Endothelial cell of umbilical vein (primary cell): ENCODE measurements at regions of chr15 and their contacts with region 1.

Region 1: GRCh38 chr15:63256433-63257274 is 20.8 kb upstream of the APH1B start:
- DNase-seq: peak; percentile 83
- H3K4me3 ChIP-seq: no peak overlapping the region
- H3K27ac ChIP-seq: peak overlapping the region; percentile 72
- H3K4me1 ChIP-seq: peaks cover 30% of the 10 kb centered on the region
- H3K27me3 ChIP-seq: no peaks in the 10 kb centered on the region
- CTCF ChIP-seq: no peak
- POLR2A ChIP-seq: no peak

Region 2: DNA sequence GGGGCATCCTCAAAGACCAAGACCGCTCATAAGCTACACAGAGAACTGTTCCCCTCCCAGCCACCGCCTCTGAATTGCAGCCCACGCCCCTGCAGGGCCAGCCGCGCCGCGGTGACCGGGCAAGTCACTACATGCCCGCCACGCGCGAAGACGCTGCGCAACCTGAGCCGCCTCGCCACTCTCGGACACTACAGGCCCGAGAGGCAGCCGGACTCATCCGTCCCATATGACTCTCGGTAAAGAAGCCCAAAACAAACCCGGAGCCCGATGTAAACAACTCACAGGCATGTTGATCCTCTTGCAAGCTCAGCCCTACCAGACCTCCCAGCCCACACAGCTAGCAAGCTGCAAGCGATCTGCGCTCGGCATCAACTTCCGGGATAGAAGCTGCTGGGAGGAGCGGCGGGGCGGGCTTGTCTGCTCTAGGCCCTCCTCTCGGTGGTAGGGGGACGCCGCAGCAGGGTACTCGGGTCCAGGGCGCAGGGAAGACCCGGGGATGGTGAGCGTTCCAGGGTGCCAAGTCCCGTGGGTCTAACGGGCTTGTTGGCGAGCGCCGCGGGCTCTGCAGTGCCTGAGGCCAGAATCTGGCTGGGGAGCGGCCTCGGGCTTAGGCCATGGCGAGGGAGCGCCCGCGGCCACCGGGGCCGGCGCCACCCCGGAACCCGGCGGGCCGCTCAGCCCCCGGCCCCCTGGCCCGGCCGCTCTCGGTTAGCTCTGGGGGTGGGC is 99.4 kb before region 1 on chr15 and contains the start of gene RPS27L:
- CTCF ChIA-PET with region 1: no interaction called
- POLR2A ChIA-PET with region 1: no interaction called
- dilution Hi-C with region 1: no loop called
- intact Hi-C with region 1: loop called (anchors 5 kb)
- DNase-seq: peak; percentile 92
- H3K4me3 ChIP-seq: peak within 1 kb of the TSS; percentile 54 to 98 (median 88)
- H3K27ac ChIP-seq: peak within 1 kb of the TSS; percentile 71
- H3K4me1 ChIP-seq: peaks cover 11% of the 10 kb centered on the region
- H3K27me3 ChIP-seq: no peaks in the 10 kb centered on the region
- CTCF ChIP-seq: no peak
- POLR2A ChIP-seq: peak; percentile 99
- total RNA-seq, gene RPS27L: 338 and 345 TPM in 2 replicates

Region 3: GRCh38 chr15:63244399-63244798 is 12.3 kb before region 1 on chr15:
- CTCF ChIA-PET with region 1: interaction called, 9 read pairs
- POLR2A ChIA-PET with region 1: no interaction called
- dilution Hi-C with region 1: no loop called
- intact Hi-C with region 1: loop called (anchors 1 kb)
- DNase-seq: peak; percentile 92
- H3K4me3 ChIP-seq: peak overlapping the region in 1 of 3 experiments; percentile 33
- H3K27ac ChIP-seq: peak overlapping the region; percentile 90
- H3K4me1 ChIP-seq: peaks cover 21% of the 10 kb centered on the region
- H3K27me3 ChIP-seq: no peaks in the 10 kb centered on the region
- CTCF ChIP-seq: no peak
- POLR2A ChIP-seq: no peak

Region 4: DNA sequence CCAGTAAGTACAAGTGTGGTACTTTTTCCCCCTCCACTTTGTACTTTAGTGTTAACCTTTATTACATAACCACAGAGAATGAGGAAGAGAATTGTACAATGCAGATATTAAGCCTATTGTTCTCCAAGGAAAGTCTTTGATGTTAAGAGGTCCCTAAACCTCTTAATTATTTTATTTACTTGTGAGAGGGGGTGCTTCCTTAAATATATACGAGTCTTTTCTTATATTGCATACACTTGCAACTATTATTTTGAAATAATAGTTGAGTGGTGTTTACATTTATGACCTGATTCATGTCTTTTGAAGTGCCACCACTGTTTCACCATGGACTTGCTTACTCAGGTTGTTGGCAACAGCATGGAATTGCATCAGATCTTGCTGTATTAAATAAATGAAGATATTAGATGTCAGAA is 257.9 kb after region 1 on chr15:
- CTCF ChIA-PET with region 1: no interaction called
- POLR2A ChIA-PET with region 1: no interaction called
- dilution Hi-C with region 1: no loop called
- intact Hi-C with region 1: no loop called
- DNase-seq: peak; percentile 28
- H3K4me3 ChIP-seq: no peak overlapping the region
- H3K27ac ChIP-seq: no peak overlapping the region
- H3K4me1 ChIP-seq: peaks cover 28% of the 10 kb centered on the region
- H3K27me3 ChIP-seq: no peaks in the 10 kb centered on the region
- CTCF ChIP-seq: no peak
- POLR2A ChIP-seq: no peak